ENCODE measurements at regions of chr10 and their contacts with region 1.

Region 1: DNA sequence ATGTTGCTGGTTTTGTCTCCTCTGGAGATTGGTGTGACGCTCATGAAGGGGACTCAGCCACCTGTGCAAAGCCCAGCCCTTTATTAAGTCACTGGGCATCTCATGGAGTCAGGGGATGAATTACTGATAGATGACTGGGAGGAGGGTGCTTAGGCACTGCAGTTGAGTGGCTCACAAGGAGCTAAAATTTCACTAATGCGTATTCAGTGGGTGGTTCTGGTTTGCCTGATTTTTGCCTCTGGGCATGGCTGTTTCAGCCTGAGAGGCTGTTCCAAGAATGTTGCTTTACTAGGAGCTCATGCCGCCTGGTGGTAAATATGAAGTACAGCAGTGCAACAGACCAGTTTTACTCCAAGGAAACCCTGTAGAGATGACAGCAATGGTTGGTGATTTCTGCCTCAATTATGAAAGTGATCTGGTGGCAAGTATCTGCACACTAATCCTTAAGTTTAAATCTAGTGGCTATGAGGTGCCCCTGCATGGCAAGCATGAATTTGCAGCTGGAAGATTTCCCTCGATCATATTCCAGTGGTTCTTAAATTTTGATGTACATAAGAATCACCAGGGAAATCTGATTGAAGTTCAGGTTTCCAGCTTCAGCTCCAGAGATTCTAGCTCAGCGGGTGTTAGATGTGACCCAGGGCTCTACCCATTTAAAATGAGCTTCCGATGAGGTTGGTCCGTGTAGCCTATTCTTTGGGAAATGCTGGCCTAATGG is 19.9 kb downstream of the ACTA2 start:
- DNase-seq: peak; percentile 58
- ATAC-seq: peak; percentile 72
- H3K4me3 Mint-ChIP-seq: no peak overlapping the region
- H3K27ac Mint-ChIP-seq: peak overlapping the region; percentile 26
- H3K4me1 Mint-ChIP-seq: peaks cover 14% of the 10 kb centered on the region
- H3K27me3 Mint-ChIP-seq: no peaks in the 10 kb centered on the region

Region 2: GRCh38 chr10:88828310-88828709 is 104.4 kb before region 1 on chr10:
- CTCF ChIA-PET with region 1: interaction called, 219 read pairs
- DNase-seq: no peak
- ATAC-seq: no peak
- H3K4me3 Mint-ChIP-seq: no peak overlapping the region
- H3K27ac Mint-ChIP-seq: no peak overlapping the region
- H3K4me1 Mint-ChIP-seq: peaks cover 76% of the 10 kb centered on the region
- H3K27me3 Mint-ChIP-seq: no peaks in the 10 kb centered on the region

Region 3: GRCh38 chr10:88886557-88886956 is 46.1 kb before region 1 on chr10:
- CTCF ChIA-PET with region 1: interaction called, 11 read pairs
- DNase-seq: peak; percentile 52
- ATAC-seq: peak; percentile 70
- H3K4me3 Mint-ChIP-seq: peak overlapping the region; percentile 4
- H3K27ac Mint-ChIP-seq: no peak overlapping the region
- H3K4me1 Mint-ChIP-seq: peaks cover 77% of the 10 kb centered on the region
- H3K27me3 Mint-ChIP-seq: no peaks in the 10 kb centered on the region

Region 4: GRCh38 chr10:88944813-88945212 is 12.1 kb after region 1 on chr10:
- CTCF ChIA-PET with region 1: interaction called, 28 read pairs
- DNase-seq: no peak
- ATAC-seq: no peak
- H3K4me3 Mint-ChIP-seq: no peak overlapping the region
- H3K27ac Mint-ChIP-seq: no peak overlapping the region
- H3K4me1 Mint-ChIP-seq: peaks cover 11% of the 10 kb centered on the region
- H3K27me3 Mint-ChIP-seq: no peaks in the 10 kb centered on the region

Region 5: GRCh38 chr10:88990384-88991160 is 57.9 kb after region 1 on chr10 and contains the start of gene FAS:
- CTCF ChIA-PET with region 1: interaction called, 70 read pairs
- DNase-seq: peak; percentile 90
- ATAC-seq: peak; percentile 71
- H3K4me3 Mint-ChIP-seq: peak within 1 kb of the TSS; percentile 94
- H3K27ac Mint-ChIP-seq: peak within 1 kb of the TSS; percentile 98
- H3K4me1 Mint-ChIP-seq: peaks cover 64% of the 10 kb centered on the region
- H3K27me3 Mint-ChIP-seq: no peaks in the 10 kb centered on the region
- total RNA-seq, gene FAS: 73.7 to 75.4 TPM

Region 6: GRCh38 chr10:89207181-89207800 is 274.6 kb after region 1 on chr10 and contains the start of gene CH25H:
- CTCF ChIA-PET with region 1: interaction called, 26 read pairs
- DNase-seq: peak; percentile 64
- ATAC-seq: peak; percentile 72
- H3K4me3 Mint-ChIP-seq: peak within 1 kb of the TSS; percentile 73
- H3K27ac Mint-ChIP-seq: peak within 1 kb of the TSS; percentile 38
- H3K4me1 Mint-ChIP-seq: peaks cover 19% of the 10 kb centered on the region
- H3K27me3 Mint-ChIP-seq: peaks cover 30% of the 10 kb centered on the region
- total RNA-seq, gene CH25H: not detected